ENCODE measurements at regions of chrX and their contacts with region 1.

Region 1: DNA sequence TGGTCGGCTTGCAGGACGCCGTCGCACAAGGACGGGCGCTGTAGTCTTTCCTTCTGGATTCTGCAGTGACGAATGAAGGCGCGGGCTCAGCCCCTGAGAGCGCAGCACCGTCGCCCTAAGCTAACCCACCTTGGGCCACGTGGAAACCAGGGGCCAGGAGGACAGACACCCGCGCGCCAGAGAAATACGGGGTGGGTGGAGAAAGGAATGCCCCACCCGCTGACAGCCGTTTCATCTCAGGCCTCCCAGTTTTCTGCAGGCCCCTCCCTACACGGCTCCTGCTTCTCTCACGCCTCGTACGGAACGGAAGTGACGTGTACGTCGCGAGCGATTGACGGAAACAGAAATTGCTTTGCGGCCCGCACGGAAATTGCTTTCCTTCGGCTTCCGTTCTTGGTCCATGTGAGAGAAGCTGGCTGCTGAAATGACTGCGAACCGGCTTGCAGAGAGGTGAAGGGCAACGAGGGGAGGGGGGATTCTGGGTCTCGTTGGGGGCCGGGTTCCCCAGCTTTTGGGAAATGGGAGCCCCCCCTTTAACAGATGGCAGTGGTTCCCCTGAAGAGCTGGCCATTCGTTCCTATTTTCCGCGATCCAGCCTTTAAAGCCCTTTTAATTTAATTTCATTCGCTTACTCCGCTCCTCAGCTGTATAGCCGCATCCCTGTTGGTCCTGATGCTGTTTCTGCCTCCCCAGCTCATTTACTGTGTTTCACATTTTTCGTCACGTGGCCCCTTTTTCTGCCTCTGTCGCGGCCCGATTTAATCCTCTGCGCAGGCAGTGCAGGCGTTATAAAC is at the start of gene UTP14A:
- DNase-seq: peak; percentile 93
- total RNA-seq, gene UTP14A: 8.9 TPM

Region 2: GRCh38 chrX:130170752-130171445 is 264.9 kb after region 1 on chrX:
- intact Hi-C with region 1: loop called (anchors 10 kb)
- DNase-seq: no peak